ENCODE measurements at regions of chr5 and their contacts with region 1.

Region 1: DNA sequence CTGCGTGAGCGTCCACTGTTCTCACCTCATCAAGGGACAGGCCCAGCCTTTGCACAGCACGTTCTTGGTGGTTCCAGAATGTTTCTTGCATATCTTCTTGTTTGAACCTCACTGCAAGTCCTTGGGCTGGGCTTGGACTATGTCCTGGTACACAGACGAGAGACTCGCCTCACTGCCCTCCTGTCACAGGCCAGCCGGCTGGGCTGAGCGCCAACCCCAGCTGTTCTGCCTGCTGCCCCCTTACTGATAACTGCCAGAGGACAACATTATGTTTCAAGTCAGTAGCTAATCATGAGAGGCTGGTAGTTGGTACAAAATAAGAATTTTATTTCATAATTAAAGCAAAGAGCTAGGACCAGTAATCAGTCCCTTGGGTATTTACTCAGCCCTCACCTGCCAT is 52.8 kb upstream of the LRRTM2 start:
- DNase-seq: no peak
- H3K4me3 Mint-ChIP-seq: no peak overlapping the region
- H3K27ac Mint-ChIP-seq: peak overlapping the region; percentile 42
- H3K4me1 Mint-ChIP-seq: peaks cover 39% of the 10 kb centered on the region
- H3K27me3 Mint-ChIP-seq: no peaks in the 10 kb centered on the region
- CTCF ChIP-seq: no peak

Region 2: DNA sequence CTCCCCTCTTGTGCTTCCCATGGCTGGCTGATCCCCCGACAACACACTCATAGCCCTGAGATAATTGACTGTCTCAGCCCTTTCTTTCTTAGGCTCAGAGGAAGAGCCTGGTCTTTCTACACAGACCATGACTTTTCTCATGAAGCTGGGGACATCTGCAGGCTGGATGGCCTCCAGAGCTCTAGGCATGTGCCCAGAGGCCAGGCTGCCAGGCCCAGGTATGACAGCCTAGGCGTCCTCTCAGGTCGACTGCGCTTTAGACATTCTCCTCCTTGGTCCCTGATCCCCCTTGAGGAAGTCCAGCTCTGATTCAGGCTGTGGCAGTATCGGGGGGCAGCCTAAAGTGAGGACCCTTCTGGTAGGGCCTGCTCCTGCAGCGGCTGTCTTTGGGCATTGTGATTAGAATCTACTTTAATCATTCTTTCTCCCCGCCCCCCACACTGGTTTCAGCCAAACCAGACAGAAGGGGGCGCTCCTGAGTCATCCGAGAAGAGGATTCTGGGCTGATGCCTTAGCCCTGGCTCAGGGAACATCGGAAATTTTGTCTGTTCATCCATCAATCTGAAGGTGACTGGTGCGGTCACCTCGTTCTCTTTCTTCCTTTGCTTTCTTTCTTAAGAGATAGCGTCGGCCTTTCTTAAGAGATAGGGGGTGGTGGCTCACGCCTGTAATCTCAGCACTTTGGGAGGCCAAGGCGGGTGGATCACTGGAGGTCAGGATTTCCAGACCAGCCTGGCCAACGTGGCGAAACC is 286.3 kb before region 1 on chr5:
- CTCF ChIA-PET with region 1: no interaction called
- intact Hi-C with region 1: no loop called
- DNase-seq: peak; percentile 91
- H3K4me3 Mint-ChIP-seq: no peak overlapping the region
- H3K27ac Mint-ChIP-seq: no peak overlapping the region
- H3K4me1 Mint-ChIP-seq: no peaks in the 10 kb centered on the region
- H3K27me3 Mint-ChIP-seq: peaks cover 25% of the 10 kb centered on the region
- CTCF ChIP-seq: peak; percentile 89

Region 3: GRCh38 chr5:138874771-138875551 is 53.0 kb before region 1 on chr5 and contains the start of gene LRRTM2:
- CTCF ChIA-PET with region 1: no interaction called
- intact Hi-C with region 1: no loop called
- DNase-seq: no peak
- H3K4me3 Mint-ChIP-seq: no peak within 1 kb of the TSS
- H3K27ac Mint-ChIP-seq: no peak within 1 kb of the TSS
- H3K4me1 Mint-ChIP-seq: peaks cover 35% of the 10 kb centered on the region
- H3K27me3 Mint-ChIP-seq: no peaks in the 10 kb centered on the region
- CTCF ChIP-seq: no peak
- total RNA-seq, gene LRRTM2: not detected in 2 replicates

Region 4: DNA sequence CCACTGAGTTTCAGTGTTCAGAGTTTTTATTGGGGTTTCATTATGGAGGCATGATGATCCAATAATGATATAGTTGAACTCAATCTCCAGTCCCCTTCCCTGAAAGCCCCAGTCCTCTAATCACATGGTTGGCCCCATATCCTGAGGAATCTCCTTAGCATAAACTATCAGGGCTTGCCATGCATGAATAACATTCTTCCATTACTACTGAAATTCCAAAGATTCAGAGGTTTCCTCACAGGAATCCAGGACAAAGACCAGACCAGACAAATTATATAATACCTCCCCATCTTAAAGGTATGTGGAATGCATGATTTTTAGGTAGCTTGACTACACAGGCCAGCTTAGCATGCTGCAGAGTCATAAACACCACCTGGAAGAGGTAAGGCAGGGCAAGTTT is 37.3 kb before region 1 on chr5:
- CTCF ChIA-PET with region 1: no interaction called
- intact Hi-C with region 1: no loop called
- DNase-seq: no peak
- H3K4me3 Mint-ChIP-seq: no peak overlapping the region
- H3K27ac Mint-ChIP-seq: no peak overlapping the region
- H3K4me1 Mint-ChIP-seq: peaks cover 9% of the 10 kb centered on the region
- H3K27me3 Mint-ChIP-seq: no peaks in the 10 kb centered on the region
- CTCF ChIP-seq: no peak

Region 5: GRCh38 chr5:139137702-139138101 is 209.7 kb after region 1 on chr5:
- CTCF ChIA-PET with region 1: no interaction called
- intact Hi-C with region 1: loop called (anchors 10 kb)
- DNase-seq: peak; percentile 44
- H3K4me3 Mint-ChIP-seq: no peak overlapping the region
- H3K27ac Mint-ChIP-seq: no peak overlapping the region
- H3K4me1 Mint-ChIP-seq: peaks cover 33% of the 10 kb centered on the region
- H3K27me3 Mint-ChIP-seq: no peaks in the 10 kb centered on the region
- CTCF ChIP-seq: no peak